Right ventricle myocardium inferior (tissue), 1 donor: ENCODE measurements at regions of chr11 and their contacts with region 1.

Region 1: DNA sequence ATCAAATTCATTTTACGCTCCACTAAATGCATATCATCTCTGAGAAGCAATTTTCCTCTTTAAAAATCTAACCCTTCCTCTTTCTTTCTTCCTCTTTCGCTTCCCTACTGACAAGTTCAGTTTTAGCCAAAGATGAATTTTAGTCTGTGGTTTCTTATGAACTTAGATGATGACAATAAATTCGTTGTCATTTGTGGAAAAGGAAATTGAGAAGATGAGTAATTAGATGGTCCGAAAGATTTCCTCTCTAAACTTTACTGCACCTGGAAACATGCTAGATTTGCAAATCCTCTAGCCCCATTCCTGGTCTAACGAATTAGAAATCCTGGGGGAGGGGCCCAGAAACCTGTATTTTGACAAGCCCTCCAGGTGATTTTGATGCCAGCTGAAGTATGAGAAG is 855.4 kb upstream of the CHORDC1 start:
- DNase-seq: no peak
- ATAC-seq: no peak

Region 2: DNA sequence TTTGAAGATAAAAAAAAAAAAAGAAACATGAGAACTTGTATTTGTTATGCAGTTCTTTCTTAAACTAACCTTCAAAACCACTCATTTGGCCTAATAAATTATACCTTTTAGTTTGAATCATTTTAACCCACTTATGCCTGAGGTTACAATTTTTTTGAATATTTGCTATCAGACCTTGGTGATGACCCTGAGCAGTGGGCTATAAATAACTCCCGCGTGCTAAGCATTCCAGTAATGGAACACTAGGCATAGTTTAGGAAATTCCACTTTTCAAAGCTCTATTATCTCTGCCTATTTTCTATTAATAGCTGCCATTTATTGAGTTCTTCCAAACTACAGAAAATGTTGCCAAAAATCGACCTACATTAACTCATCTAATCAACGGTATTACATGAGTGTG is 153.0 kb after region 1 on chr11:
- intact Hi-C with region 1: loop called (anchors 10 kb)
- DNase-seq: no peak
- ATAC-seq: peak; percentile 82